ENCODE measurements at regions of chr2 and their contacts with region 1.

Region 1: GRCh38 chr2:186589612-186590349 is at the start of gene ITGAV:
- DNase-seq: peak; percentile 71
- ATAC-seq: peak; percentile 96
- H3K4me3 ChIP-seq: peak within 1 kb of the TSS; percentile 84 to 88
- H3K27ac ChIP-seq: peak within 1 kb of the TSS; percentile 84
- H3K4me1 ChIP-seq: peaks cover 7 to 26% of the 10 kb centered on the region in 2 experiments; a peak in 3 of 4 replicates
- H3K27me3 ChIP-seq: no peaks in the 10 kb centered on the region
- CTCF ChIP-seq: no peak
- POLR2A ChIP-seq: peak; percentile 65
- RAD21 ChIP-seq: no peak
- total RNA-seq, gene ITGAV: 36.3 TPM

Region 2: DNA sequence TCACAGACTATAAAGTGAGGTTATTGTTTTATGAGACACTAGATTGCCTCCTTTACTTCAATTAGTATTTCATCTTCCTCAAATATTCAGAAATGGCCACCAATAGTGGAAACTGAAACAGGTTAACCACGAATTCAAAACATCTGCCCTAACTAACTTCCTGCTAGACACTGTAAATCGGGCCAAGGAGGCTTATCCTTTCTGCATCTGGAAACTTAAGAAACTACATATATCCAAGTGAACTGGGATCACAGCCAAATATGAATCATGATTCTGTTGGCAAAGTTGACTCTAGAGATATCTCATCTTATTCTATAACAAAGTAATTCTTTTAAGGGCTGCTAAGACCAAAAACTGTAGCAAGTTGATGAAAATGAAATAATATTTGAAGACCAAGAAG is 240.3 kb before region 1 on chr2:
- CTCF ChIA-PET with region 1: no interaction called
- POLR2A ChIA-PET with region 1: no interaction called
- RAD21 ChIA-PET with region 1: no interaction called
- intact Hi-C with region 1: no loop called
- DNase-seq: peak; percentile 13
- ATAC-seq: no peak
- H3K4me3 ChIP-seq: no peak overlapping the region
- H3K27ac ChIP-seq: no peak overlapping the region
- H3K4me1 ChIP-seq: peaks cover 0 to 4% of the 10 kb centered on the region in 2 experiments; a peak in 1 of 4 replicates
- H3K27me3 ChIP-seq: no peaks in the 10 kb centered on the region
- CTCF ChIP-seq: no peak
- POLR2A ChIP-seq: no peak
- RAD21 ChIP-seq: no peak

Region 3: GRCh38 chr2:186570587-186570986 is 19.2 kb before region 1 on chr2:
- CTCF ChIA-PET with region 1: no interaction called
- POLR2A ChIA-PET with region 1: interaction called, 10 read pairs
- RAD21 ChIA-PET with region 1: no interaction called
- intact Hi-C with region 1: no loop called
- DNase-seq: no peak
- ATAC-seq: peak; percentile 53
- H3K4me3 ChIP-seq: 0 out of 4 replicates have a peak overlapping the region, but pooled peaks of 1 of the 2 experiments have one; percentile 2
- H3K27ac ChIP-seq: no peak overlapping the region
- H3K4me1 ChIP-seq: peaks cover 31 to 43% of the 10 kb centered on the region in 2 experiments
- H3K27me3 ChIP-seq: no peaks in the 10 kb centered on the region
- CTCF ChIP-seq: no peak
- POLR2A ChIP-seq: no peak
- RAD21 ChIP-seq: no peak